ENCODE measurements at regions of chr3 and their contacts with region 1.

Region 1: DNA sequence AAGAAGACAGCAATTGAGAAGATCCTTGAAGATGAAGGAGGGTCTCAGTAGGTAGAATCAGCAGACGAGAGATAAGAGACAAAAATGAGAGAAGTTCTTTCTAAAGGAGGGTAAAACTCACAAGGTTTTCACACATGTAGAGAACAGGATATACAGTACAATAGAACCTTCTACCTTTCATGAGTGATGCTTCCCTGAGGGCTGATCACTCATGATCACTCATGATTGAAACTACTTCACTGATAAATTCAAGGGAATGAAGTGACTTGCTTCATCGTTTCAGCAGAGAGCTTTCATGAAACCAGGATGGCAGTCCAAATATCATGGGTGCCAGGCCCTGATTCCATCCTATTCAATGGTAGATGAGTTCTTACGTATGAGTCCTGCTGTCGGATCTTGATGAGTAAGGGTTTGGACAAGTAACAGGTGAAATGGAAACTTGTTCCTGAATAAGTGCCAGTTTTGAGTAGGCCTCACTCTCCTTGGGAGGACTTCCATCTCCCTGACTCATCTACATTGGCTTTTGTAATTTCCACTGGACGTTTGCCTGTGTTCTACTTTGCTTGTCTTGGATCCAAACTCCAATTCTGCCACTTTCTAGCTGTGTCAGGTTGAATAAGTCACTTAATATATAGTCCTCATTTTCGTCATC is 9.6 kb upstream of the CLDN16 start:
- DNase-seq: no peak
- ATAC-seq: no peak
- H3K4me3 ChIP-seq: no peak overlapping the region
- H3K27ac ChIP-seq: no peak overlapping the region
- H3K4me1 ChIP-seq: no peaks in the 10 kb centered on the region
- H3K27me3 ChIP-seq: no peaks in the 10 kb centered on the region; a peak in 1 of 4 replicates
- CTCF ChIP-seq: no peak
- EP300 ChIP-seq: no peak
- POLR2A ChIP-seq: no peak
- RAD21 ChIP-seq: no peak

Region 2: DNA sequence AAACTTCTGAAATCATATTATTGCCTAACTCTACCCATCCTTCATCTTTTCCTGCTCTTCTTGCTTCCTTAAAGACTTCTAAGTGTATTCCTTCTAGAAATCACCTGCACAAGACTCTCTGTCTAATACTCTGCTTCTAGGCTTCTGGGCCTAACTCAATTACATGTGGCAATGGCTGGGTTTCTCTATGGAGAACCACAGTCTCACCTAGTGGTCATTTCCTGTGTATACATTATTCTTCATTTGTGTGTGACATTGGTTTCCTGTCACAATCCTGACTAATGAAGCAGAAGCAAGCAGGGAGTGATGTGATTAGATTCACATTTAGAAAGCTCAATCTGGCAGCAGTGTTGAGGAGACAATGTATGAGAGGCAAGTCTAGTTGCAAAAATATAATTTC is 39.2 kb before region 1 on chr3:
- CTCF ChIA-PET with region 1: interaction called, 19 read pairs
- POLR2A ChIA-PET with region 1: no interaction called
- RAD21 ChIA-PET with region 1: interaction called, 13 read pairs
- SMC1A ChIA-PET with region 1: interaction called, 22 read pairs
- in situ Hi-C with region 1: no loop called
- intact Hi-C with region 1: no loop called
- DNase-seq: peak; percentile 11
- ATAC-seq: peak; percentile 95
- H3K4me3 ChIP-seq: no peak overlapping the region
- H3K27ac ChIP-seq: no peak overlapping the region
- H3K4me1 ChIP-seq: no peaks in the 10 kb centered on the region
- H3K27me3 ChIP-seq: no peaks in the 10 kb centered on the region
- CTCF ChIP-seq: peak; percentile 21 to 34 (median 28); a peak in 4 of 6 replicates
- EP300 ChIP-seq: no peak
- POLR2A ChIP-seq: no peak
- RAD21 ChIP-seq: peak; percentile 62

Region 3: GRCh38 chr3:190366145-190366544 is 12.2 kb before region 1 on chr3:
- CTCF ChIA-PET with region 1: interaction called, 20 read pairs
- POLR2A ChIA-PET with region 1: no interaction called
- RAD21 ChIA-PET with region 1: interaction called, 7 read pairs
- SMC1A ChIA-PET with region 1: interaction called, 16 read pairs
- in situ Hi-C with region 1: no loop called
- intact Hi-C with region 1: no loop called
- DNase-seq: no peak
- ATAC-seq: no peak
- H3K4me3 ChIP-seq: no peak overlapping the region
- H3K27ac ChIP-seq: no peak overlapping the region
- H3K4me1 ChIP-seq: no peaks in the 10 kb centered on the region
- H3K27me3 ChIP-seq: no peaks in the 10 kb centered on the region
- CTCF ChIP-seq: no peak
- EP300 ChIP-seq: no peak
- POLR2A ChIP-seq: no peak
- RAD21 ChIP-seq: no peak